CD8-positive, alpha-beta T cell (primary cell): ENCODE measurements at regions of chr4 and their contacts with region 1.

Region 1: DNA sequence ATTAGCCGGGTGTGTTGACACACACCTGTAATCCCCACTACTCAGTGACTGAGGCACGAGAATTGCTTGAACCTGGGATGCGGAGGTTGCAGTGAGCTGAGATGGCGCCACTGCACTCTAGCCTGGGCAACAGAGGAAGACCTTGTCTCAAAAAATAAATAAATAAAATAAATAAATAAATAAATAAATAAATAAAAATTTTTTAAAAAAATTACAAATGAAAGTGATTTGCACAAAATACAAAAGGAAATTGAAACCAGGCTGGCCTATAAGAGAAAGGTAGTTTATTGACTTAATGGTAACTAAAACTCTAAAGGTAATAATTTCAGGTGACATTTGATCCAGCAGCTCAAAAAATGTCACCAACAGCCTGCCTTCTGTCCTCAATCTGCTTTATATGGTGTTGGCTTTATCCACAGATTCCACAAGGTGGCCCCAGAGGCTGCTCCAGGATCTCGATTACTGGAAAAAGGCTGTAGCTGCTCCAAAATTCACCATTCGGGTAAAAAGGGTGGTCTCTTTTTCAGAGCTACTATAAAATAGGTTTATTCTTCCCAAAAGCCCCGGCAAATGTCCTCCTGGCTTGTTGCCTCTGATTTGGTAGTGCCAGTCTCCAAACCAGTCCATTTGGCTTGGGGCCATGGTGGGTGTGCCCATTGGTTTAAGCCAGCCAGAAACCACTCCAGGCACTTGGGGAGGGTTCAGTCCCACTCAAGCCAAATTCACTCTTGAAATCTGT is 61.4 kb upstream of the TRIM2 start:
- DNase-seq: peak in 8 of 9 experiments; percentile 19 to 70 (median 50)
- ATAC-seq: peak; percentile 68
- H3K4me3 ChIP-seq: no peak overlapping the region
- H3K4me3 Mint-ChIP-seq: no peak overlapping the region
- H3K27ac ChIP-seq: no peak overlapping the region
- H3K27ac Mint-ChIP-seq: no peak overlapping the region
- H3K4me1 ChIP-seq: no peaks in the 10 kb centered on the region
- H3K4me1 Mint-ChIP-seq: no peaks in the 10 kb centered on the region
- H3K27me3 ChIP-seq: no peaks in the 10 kb centered on the region
- H3K27me3 Mint-ChIP-seq: peaks cover 5% of the 10 kb centered on the region
- CTCF ChIP-seq: peak; percentile 62

Region 2: DNA sequence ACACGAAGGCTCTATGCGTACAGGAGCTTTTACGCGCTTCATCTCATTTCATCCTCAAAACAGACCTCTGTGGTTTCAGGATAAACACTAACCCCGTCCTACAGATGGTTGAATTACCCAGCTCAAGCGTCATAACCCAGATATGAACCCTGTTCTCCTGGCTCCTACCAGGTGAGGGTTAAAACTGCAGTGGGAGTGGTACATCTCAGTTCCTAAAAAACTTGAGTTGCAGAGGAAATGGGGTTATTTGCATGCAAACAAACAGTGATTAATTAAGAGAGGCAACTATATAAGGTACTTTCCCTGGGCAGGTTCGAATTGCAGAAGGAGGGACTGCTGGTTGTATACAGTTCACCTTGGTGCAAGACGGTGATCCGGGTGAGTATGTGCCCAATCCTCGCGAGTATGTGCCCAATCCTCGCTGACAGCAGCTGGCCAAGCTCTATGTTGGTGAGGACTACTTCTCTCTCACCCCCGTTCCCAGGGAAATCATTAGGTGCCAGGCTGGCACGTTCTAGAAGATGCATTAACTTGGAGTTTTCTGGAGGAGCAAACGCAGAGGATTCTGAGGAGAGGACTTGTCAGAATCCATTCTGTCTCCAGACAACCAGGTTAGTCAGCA is 134.2 kb before region 1 on chr4:
- CTCF ChIA-PET with region 1: no interaction called
- POLR2A ChIA-PET with region 1: no interaction called
- intact Hi-C with region 1: loop called in 1 of 2 experiments (anchors 5 kb)
- DNase-seq: peak in 1 of 9 experiments; percentile 8
- ATAC-seq: no peak
- H3K4me3 ChIP-seq: no peak overlapping the region
- H3K4me3 Mint-ChIP-seq: no peak overlapping the region
- H3K27ac ChIP-seq: no peak overlapping the region
- H3K27ac Mint-ChIP-seq: no peak overlapping the region
- H3K4me1 ChIP-seq: no peaks in the 10 kb centered on the region
- H3K4me1 Mint-ChIP-seq: no peaks in the 10 kb centered on the region
- H3K27me3 ChIP-seq: no peaks in the 10 kb centered on the region
- H3K27me3 Mint-ChIP-seq: no peaks in the 10 kb centered on the region
- CTCF ChIP-seq: no peak

Region 3: GRCh38 chr4:153318696-153319320 is 175.9 kb after region 1 on chr4:
- CTCF ChIA-PET with region 1: interaction called, 11 read pairs
- POLR2A ChIA-PET with region 1: no interaction called
- intact Hi-C with region 1: loop called (anchors 1 kb)
- DNase-seq: peak in 3 of 9 experiments; percentile 6 to 53 (median 35)
- ATAC-seq: no peak
- H3K4me3 ChIP-seq: no peak overlapping the region
- H3K4me3 Mint-ChIP-seq: no peak overlapping the region
- H3K27ac ChIP-seq: no peak overlapping the region
- H3K27ac Mint-ChIP-seq: no peak overlapping the region
- H3K4me1 ChIP-seq: no peaks in the 10 kb centered on the region
- H3K4me1 Mint-ChIP-seq: no peaks in the 10 kb centered on the region
- H3K27me3 ChIP-seq: peaks cover 0 to 2% of the 10 kb centered on the region in 2 experiments
- H3K27me3 Mint-ChIP-seq: no peaks in the 10 kb centered on the region
- CTCF ChIP-seq: no peak

Region 4: GRCh38 chr4:153438916-153439756 is 296.3 kb after region 1 on chr4:
- CTCF ChIA-PET with region 1: no interaction called
- POLR2A ChIA-PET with region 1: no interaction called
- intact Hi-C with region 1: loop called in 1 of 2 experiments (anchors 5 kb)
- DNase-seq: peak in 7 of 9 experiments; percentile 18 to 75 (median 49)
- ATAC-seq: peak; percentile 74
- H3K4me3 ChIP-seq: peak overlapping the region; percentile 45 to 47
- H3K4me3 Mint-ChIP-seq: peak overlapping the region; percentile 80
- H3K27ac ChIP-seq: peak overlapping the region; percentile 38 to 89
- H3K27ac Mint-ChIP-seq: peak overlapping the region; percentile 88
- H3K4me1 ChIP-seq: peaks cover 31% of the 10 kb centered on the region
- H3K4me1 Mint-ChIP-seq: peaks cover 48% of the 10 kb centered on the region
- H3K27me3 ChIP-seq: no peaks in the 10 kb centered on the region
- H3K27me3 Mint-ChIP-seq: no peaks in the 10 kb centered on the region
- CTCF ChIP-seq: no peak

Region 5: DNA sequence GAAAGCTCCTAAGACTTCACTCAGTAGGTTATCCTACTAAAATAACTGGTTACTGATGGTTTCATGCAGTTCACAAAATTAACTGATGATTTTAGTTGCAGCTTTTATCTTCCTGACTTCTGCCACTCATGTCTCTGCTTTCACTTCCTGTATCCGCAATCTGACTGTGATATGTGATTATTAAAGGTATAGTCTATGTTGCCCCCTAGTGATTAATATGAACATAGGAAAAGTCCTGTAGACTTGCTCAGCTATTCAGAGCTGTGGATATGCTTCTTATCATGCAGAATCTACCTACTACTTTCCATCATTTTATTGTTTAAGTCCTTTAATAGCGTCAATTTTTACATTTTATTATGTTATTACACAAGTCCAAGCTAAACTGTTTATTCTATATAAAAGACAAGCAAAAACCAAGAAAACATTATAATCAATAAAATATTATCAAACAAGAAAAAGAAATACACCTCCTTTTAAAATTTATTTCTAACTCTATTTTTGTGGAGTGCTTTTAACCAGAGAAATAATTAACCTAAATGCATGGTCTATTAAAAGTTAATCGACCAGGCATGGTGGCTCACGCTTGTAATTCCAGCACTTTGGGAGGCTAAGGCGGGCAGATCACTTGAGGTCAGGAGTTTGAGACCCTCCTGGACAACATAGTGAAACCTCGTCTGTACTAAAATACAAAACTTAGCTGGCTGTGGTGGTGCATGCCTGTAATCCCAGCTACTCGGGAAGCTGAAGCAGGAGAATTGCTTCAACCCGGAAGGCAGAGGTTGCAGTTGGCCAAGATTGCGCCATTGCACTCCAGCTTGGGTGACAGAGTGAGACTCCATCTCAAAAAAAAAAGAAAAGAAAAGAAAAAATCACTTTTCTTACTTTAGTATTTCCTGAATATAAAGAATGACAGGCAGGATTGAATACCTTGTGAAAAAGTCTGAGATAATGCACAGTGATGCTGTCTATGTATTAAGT is 500.8 kb after region 1 on chr4:
- CTCF ChIA-PET with region 1: interaction called, 5 read pairs
- POLR2A ChIA-PET with region 1: no interaction called
- intact Hi-C with region 1: loop called (anchors 2 to 10 kb)
- DNase-seq: peak in 2 of 9 experiments; percentile 63 to 75
- ATAC-seq: peak; percentile 99
- H3K4me3 ChIP-seq: no peak overlapping the region
- H3K4me3 Mint-ChIP-seq: no peak overlapping the region
- H3K27ac ChIP-seq: no peak overlapping the region
- H3K27ac Mint-ChIP-seq: peak overlapping the region; percentile 49
- H3K4me1 ChIP-seq: no peaks in the 10 kb centered on the region
- H3K4me1 Mint-ChIP-seq: peaks cover 3% of the 10 kb centered on the region
- H3K27me3 ChIP-seq: no peaks in the 10 kb centered on the region
- H3K27me3 Mint-ChIP-seq: no peaks in the 10 kb centered on the region
- CTCF ChIP-seq: peak; percentile 62

Region 6: DNA sequence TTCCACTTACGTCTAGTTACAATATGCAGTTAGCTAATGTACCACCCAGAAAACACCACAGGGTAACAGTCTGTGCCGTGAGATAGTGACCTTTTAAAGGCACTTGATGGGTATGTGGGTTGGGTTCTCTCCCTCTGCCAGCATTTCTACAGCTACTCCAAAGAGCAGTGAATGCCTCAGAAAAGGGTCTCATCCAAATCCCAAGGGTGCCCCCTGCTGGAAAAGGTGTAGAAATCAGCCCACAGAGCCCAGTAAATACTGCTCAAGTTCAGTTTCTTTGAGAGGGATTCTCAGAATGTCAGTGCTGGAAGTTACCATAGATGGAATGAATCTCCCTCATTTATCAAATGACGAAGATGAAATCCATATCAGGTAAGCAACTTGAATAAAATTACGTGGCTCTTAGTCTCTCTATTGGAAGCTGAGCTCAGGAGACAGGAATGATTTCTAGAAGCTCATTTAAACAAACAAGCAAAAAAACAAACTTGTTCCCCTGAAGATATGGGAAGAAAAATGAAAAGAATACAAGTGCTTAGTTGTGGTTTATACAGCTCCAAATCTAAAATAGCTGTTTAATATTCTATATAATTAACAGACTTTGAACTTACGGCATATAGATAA is 607.4 kb after region 1 on chr4:
- CTCF ChIA-PET with region 1: interaction called, 8 read pairs
- POLR2A ChIA-PET with region 1: no interaction called
- intact Hi-C with region 1: loop called (anchors 1 to 10 kb)
- DNase-seq: peak; percentile 21 to 70 (median 56)
- ATAC-seq: peak; percentile 64
- H3K4me3 ChIP-seq: no peak overlapping the region
- H3K4me3 Mint-ChIP-seq: no peak overlapping the region
- H3K27ac ChIP-seq: no peak overlapping the region
- H3K27ac Mint-ChIP-seq: no peak overlapping the region
- H3K4me1 ChIP-seq: peaks cover 10% of the 10 kb centered on the region
- H3K4me1 Mint-ChIP-seq: peaks cover 12% of the 10 kb centered on the region
- H3K27me3 ChIP-seq: no peaks in the 10 kb centered on the region
- H3K27me3 Mint-ChIP-seq: peaks cover 4% of the 10 kb centered on the region
- CTCF ChIP-seq: peak; percentile 76